AG04450 (cell line): ENCODE measurements at regions of chr5 and their contacts with region 1.

Region 1: DNA sequence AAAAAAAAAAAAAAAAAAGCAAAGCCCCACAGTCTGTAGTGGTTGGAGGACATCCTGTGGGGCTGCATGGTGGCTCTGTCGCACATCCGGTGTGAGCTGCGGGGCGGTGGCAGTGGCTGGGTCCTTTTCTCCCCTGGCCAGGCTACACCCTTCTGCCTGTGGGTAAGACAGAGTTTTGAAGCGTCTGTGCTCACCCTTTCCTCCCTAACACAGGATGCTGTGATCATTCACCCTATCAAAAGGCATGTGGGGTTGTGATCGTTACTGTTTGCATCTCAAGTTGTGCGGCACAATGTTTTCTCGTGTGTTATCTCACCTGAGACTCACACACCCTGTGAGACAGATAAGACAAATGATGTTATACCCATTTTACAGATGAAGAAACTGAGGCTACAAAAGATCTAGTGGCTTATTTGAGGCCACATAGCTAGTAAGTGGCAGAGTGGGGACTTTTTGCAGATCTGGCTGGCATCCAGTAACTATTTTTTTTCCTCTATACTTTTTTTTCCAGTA is 17.5 kb downstream of the IRF1 start:
- DNase-seq: no peak
- H3K4me3 ChIP-seq: no peak overlapping the region
- H3K27ac ChIP-seq: no peak overlapping the region
- H3K27me3 ChIP-seq: no peaks in the 10 kb centered on the region
- CTCF ChIP-seq: no peak

Region 2: DNA sequence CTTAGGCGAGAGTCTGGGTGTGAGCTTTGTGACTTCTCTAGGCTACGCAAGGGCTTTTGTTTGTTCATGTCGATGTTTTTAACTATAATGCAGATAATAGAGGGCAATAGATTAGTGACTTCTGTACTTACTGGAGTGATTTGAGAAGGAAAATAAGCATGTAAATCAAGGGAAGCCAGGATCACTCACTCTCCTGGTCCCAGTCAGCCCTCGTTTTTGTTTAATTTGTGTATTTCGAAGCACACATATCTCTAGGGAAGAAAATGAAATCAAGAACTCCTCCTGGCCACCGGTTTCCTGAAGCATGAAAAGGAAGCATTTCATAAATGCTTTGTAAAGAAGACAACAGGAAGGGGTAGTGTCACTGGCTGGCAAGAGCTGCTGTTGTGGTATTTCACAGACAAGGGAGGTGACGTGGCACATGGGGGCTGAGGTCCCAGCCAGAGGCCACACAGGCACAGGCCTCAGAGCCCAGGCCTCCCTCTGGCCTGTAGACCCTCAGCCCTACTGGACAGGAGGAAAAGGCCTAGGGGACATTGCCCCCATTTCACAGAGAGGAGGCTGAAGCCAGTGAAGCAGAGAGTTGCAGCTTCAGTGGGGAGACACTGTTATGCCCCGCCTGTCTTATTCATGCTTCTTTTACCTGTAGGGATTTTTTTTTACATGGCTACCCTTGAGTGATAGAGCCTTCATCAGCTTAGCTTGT is 16.6 kb before region 1 on chr5:
- CTCF ChIA-PET with region 1: interaction called, 14 read pairs
- POLR2A ChIA-PET with region 1: interaction called, 9 read pairs
- DNase-seq: no peak
- H3K4me3 ChIP-seq: no peak overlapping the region
- H3K27ac ChIP-seq: peak overlapping the region; percentile 90
- H3K27me3 ChIP-seq: no peaks in the 10 kb centered on the region
- CTCF ChIP-seq: no peak

Region 3: DNA sequence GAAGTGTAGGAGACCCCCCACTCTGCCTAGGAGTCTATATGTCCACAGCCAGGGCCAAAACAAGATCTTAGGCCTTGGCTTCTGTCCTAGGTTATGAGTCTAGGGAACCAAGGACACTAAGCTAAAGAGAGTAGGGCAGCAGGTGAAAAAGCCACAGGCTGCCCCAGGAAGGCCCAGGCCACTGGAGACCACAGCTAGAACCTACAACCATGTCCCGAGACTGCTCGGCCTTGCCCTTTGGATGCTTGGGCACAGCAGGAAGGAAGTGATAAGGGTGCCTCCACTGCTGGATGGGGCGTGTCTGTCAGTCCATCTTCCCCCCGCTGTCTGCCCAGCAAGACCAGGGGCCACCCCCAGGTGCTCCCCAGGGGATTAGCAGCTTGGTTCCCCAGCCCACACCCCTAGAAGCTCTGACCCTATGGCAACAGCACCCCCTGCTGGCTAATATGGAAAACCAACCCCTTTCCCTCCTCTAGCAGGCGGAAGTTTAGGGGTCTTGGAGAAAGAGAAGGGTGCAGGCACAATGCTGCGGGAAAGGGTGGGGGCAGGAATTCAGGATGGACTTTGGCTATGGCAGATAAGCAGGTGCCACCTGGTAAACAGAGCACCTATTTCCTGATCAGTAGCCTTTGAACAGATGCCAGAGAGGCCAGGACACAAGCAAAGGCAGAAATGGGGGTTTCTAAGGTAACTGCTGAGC is 28.0 kb after region 1 on chr5:
- CTCF ChIA-PET with region 1: no interaction called
- POLR2A ChIA-PET with region 1: no interaction called
- DNase-seq: no peak
- H3K4me3 ChIP-seq: no peak overlapping the region
- H3K27ac ChIP-seq: no peak overlapping the region
- H3K27me3 ChIP-seq: no peaks in the 10 kb centered on the region
- CTCF ChIP-seq: peak; percentile 76